Dorsolateral prefrontal cortex (tissue), 120 donors: ENCODE measurements at regions of chr15 and their contacts with region 1.

Region 1: DNA sequence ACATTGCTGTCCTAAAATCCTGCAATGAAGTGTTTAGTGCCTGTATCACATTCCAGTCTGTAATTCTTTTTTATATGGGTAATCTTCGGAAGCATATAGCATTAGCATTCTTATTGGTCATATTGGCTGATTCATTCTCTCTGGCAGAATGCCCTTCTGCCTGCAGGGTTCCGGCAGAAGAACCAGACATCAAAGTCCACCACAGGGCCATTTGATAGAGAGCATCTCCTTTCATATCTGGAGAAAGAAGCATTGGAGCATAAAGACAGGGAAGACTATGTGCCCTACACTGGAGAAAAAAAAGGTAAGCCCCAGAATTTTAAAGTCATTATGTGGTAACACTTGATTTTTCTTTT is 39.6 kb downstream of the TMOD3 start:
- DNase-seq: no peak
- H3K4me3 ChIP-seq: no peak overlapping the region
- H3K27ac ChIP-seq: peak overlapping the region in 1 of 59 donors; percentile 34
- H3K27me3 ChIP-seq: no peaks in the 10 kb centered on the region
- CTCF ChIP-seq: no peak

Region 2: GRCh38 chr15:51829360-51830275 is 39.4 kb before region 1 on chr15 and contains the start of gene TMOD3:
- intact Hi-C with region 1: loop called in 1 of 2 experiments (anchors 5 kb)
- DNase-seq: peak; percentile 84 to 96 (median 92)
- H3K4me3 ChIP-seq: peak within 1 kb of the TSS; percentile 58 to 99 (median 93)
- H3K27ac ChIP-seq: peak within 1 kb of the TSS in 58 of 59 donors; percentile 3 to 94 (median 82)
- H3K27me3 ChIP-seq: no peaks in the 10 kb centered on the region
- CTCF ChIP-seq: peak in 38 of 56 donors; percentile 5 to 55 (median 28)
- total RNA-seq, gene TMOD3: 13.9 to 34.3 (median 21.4) TPM

Region 3: GRCh38 chr15:51926808-51927207 is 57.8 kb after region 1 on chr15:
- intact Hi-C with region 1: loop called in 1 of 2 experiments (anchors 2 kb)
- DNase-seq: no peak
- H3K4me3 ChIP-seq: no peak overlapping the region
- H3K27ac ChIP-seq: no peak overlapping the region
- H3K27me3 ChIP-seq: no peaks in the 10 kb centered on the region
- CTCF ChIP-seq: no peak

Region 4: DNA sequence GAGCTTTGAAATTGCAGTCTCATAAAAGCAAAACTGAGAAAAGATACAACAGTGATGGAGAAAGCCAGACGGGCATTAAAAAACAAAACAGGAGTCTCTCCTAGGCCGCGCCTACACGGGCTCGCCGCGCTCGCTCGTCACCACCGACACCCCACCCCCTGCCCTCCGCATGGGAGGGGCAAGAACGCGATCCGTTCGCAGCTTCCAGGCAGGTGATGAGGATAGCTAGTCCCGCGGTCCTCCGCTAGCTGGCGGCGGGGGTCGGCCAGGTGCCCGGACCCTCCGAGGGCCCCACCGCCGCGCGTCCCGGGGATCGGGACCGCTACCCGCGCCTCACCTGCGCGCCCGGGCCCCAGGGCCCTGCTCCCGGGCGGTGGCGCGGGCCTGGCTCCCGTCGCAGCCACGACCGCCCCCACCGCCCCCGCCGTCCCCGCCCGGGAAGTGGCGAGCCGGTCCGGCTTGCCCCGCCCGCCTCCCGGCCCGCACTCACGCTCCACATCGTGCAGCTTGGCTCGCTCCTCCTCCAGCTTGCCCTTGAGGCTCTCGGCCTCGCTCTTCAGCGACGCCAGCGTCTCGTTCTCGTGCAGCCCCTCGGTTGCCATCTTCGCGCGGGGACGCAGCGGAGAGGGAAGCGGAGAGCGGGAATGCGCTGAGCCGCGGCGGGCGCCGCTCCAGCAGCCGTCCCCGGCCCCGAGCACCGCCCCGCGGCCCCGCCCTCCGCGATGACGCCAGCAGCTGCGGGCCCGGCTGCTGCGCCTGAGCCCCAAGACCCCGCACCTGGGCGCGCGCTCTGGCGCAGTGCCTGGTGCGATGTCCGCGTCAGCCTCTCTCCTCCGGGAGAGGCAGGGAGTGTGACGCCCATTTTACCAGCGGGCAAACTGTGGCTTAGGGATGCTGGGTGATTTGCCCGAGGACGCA is 310.5 kb after region 1 on chr15:
- intact Hi-C with region 1: no loop called
- DNase-seq: peak; percentile 52 to 92 (median 80)
- H3K4me3 ChIP-seq: peak overlapping the region; percentile 55 to 98 (median 81)
- H3K27ac ChIP-seq: peak overlapping the region in 58 of 59 donors; percentile 31 to 96 (median 86)
- H3K27me3 ChIP-seq: no peaks in the 10 kb centered on the region
- CTCF ChIP-seq: peak in 2 of 56 donors; percentile 1 to 7